ENCODE measurements at regions of chr4 and their contacts with region 1.

Region 1: DNA sequence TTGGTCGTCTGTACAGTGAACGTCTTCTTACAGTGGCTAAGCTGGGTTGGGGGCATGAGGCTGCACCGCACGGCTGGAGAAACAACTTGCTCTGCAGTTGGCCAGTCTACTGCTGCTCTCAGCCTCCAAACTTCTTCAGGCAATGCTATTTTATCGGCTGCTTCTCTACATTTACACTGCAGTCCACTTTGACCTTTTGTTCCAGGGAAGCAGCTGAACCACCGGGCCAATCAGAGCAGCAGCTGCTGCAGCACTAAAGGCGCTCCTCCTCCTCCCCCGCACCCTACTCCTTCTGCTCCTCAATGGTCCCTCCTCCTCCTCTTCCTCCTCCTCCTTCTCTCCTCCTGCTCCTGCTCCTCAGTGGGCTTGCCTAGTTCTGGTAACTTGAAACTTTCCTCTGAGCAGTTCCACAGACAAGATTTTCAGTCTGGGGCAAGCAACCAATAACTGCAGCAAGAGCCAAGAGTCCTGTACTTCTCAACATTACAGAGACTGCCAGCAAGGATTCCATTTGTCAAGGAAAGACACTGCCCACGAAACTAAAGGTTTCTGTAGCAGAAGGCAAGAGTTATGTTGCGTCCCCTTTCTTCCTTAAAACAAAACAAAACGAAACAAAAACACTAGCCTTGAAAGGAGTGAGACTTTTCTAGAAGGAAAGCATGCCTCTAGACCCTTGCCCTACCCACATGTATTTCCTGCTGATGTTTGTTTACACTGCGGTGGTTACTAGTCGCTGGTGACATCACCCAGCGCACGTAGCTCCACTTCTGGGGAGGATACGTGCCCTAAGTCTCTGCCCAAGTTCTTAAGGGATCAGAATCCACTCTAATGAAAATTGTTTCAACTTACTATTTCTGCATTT is 125.7 kb upstream of the NAP1L5 start:
- DNase-seq: peak; percentile 36 to 94 (median 61)
- ATAC-seq: peak; percentile 95
- H3K4me3 ChIP-seq: peak overlapping the region; percentile 42 to 51
- H3K4me3 Mint-ChIP-seq: peak overlapping the region; percentile 93
- H3K27ac ChIP-seq: peak overlapping the region; percentile 52 to 83
- H3K27ac Mint-ChIP-seq: peak overlapping the region; percentile 94
- H3K4me1 ChIP-seq: peaks cover 5% of the 10 kb centered on the region
- H3K4me1 Mint-ChIP-seq: peaks cover 29% of the 10 kb centered on the region
- H3K27me3 ChIP-seq: peaks cover 0 to 2% of the 10 kb centered on the region in 2 experiments
- H3K27me3 Mint-ChIP-seq: no peaks in the 10 kb centered on the region
- CTCF ChIP-seq: no peak

Region 2: DNA sequence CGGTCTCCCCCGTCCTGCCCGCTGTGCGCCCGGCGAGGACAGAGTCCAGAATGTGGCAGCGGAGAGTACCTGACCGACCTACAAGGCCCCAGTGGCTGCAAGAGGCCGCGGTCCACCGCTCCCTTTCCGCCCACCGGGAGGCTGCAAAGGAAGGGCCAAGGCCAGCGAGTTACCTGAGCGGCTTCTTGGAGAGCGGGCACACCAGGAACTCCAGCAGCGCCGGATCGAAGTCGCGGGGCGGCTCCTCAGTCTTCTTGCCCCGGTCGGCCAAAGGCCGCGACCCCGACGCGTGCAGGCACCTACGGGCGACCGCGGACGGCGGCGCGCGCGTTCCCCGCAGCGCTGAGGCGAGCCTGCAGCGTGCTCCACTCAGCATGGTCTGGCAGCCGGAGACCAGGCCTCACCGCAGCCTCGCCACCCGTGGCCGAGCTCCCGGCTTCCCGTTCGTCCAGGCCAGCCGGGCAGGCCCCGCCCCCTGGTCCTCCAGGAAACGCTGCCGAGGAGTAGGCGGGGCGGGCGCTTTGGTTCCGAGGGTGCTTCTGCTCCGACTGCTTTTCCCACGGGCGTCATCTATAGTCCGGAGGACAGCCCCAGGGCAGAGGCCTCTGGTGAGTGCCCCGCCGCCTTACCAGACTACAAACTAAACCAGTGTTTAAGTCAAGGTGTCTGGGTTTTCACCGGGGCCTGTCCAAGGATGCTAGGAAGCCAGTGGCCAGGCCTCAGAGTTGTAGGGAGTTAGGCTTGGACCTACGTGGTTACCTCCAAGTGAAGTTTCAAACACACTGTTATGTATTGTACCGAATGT is 299.8 kb before region 1 on chr4 and contains the start of gene PYURF:
- CTCF ChIA-PET with region 1: interaction called, 3 read pairs
- POLR2A ChIA-PET with region 1: no interaction called
- intact Hi-C with region 1: loop called (anchors 5 to 10 kb)
- DNase-seq: peak; percentile 31 to 87 (median 75)
- ATAC-seq: peak; percentile 76
- H3K4me3 ChIP-seq: peak within 1 kb of the TSS; percentile 78 to 90
- H3K4me3 Mint-ChIP-seq: peak within 1 kb of the TSS; percentile 93
- H3K27ac ChIP-seq: peak within 1 kb of the TSS; percentile 54 to 76
- H3K27ac Mint-ChIP-seq: peak within 1 kb of the TSS; percentile 94
- H3K4me1 ChIP-seq: peaks cover 16% of the 10 kb centered on the region
- H3K4me1 Mint-ChIP-seq: peaks cover 43% of the 10 kb centered on the region
- H3K27me3 ChIP-seq: no peaks in the 10 kb centered on the region
- H3K27me3 Mint-ChIP-seq: no peaks in the 10 kb centered on the region
- CTCF ChIP-seq: no peak
- total RNA-seq, gene PYURF: 25.5 to 27.6 TPM

Region 3: GRCh38 chr4:88702782-88703181 is 120.5 kb before region 1 on chr4:
- CTCF ChIA-PET with region 1: no interaction called
- POLR2A ChIA-PET with region 1: no interaction called
- intact Hi-C with region 1: loop called in 1 of 2 experiments (anchors 5 kb)
- DNase-seq: no peak
- ATAC-seq: no peak
- H3K4me3 ChIP-seq: no peak overlapping the region
- H3K4me3 Mint-ChIP-seq: no peak overlapping the region
- H3K27ac ChIP-seq: no peak overlapping the region
- H3K27ac Mint-ChIP-seq: no peak overlapping the region
- H3K4me1 ChIP-seq: peaks cover 4% of the 10 kb centered on the region
- H3K4me1 Mint-ChIP-seq: peaks cover 6% of the 10 kb centered on the region
- H3K27me3 ChIP-seq: no peaks in the 10 kb centered on the region
- H3K27me3 Mint-ChIP-seq: no peaks in the 10 kb centered on the region
- CTCF ChIP-seq: no peak

Region 4: DNA sequence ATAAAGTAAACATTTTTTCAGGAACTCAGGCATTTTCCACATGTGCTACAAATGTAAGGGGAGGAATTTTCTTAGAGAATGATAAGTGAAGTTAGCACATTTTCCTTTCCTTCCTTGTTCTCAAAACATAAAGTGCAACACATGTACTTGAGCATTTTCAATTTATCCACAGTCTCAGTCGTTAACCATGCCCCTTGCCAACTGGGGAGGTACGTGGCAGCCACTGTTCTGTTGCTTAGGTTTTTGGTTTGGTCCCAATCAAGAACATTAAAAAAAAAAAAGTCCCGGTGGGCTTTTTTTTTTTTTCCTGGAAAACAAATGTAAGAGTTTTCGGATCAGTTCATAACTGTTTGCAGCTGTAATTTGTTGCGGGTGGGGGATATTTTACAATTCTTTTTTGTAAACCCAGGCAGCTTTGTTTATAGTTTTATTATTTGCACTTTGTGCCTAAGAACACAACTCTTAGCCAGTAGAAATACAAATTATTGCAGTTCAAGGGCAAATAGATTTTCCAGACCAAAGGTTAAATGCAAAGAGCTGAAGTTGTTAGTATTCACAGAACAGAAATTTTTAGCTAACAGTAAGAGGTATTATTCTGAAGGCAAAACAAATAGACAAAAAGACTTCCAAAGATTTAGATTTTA is 13.6 kb before region 1 on chr4:
- CTCF ChIA-PET with region 1: interaction called, 10 read pairs
- POLR2A ChIA-PET with region 1: no interaction called
- intact Hi-C with region 1: no loop called
- DNase-seq: no peak
- ATAC-seq: no peak
- H3K4me3 ChIP-seq: no peak overlapping the region
- H3K4me3 Mint-ChIP-seq: no peak overlapping the region
- H3K27ac ChIP-seq: no peak overlapping the region
- H3K27ac Mint-ChIP-seq: no peak overlapping the region
- H3K4me1 ChIP-seq: no peaks in the 10 kb centered on the region
- H3K4me1 Mint-ChIP-seq: no peaks in the 10 kb centered on the region
- H3K27me3 ChIP-seq: no peaks in the 10 kb centered on the region
- H3K27me3 Mint-ChIP-seq: no peaks in the 10 kb centered on the region
- CTCF ChIP-seq: no peak

Region 5: DNA sequence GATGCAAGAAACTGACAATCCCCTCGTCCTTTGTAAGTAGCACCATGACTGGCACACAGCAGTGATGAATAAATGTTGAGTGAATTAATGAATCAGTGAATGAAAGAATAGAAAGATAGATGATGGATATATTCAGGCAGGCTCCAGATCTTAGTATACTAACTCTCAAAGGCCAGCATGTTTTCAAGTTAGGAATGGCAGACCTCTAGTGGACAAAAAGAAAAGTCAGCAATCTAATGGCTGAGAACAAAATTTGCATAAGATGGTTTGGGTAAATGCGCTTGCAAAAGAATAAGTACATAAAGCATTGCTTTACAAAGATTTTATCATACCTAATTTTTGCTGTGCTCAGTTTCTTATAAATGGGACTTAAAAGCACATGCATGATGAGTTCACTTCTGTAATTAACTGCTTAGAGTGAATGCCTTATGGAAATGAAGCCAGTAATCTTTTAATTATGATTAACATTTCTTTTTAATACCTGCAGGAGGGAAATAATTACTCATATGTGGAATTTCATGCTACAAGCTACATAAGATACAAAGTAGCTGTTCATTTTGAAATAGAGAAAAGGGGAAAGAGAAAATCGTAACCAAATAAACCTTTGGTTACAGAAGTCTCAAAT is 611.2 kb after region 1 on chr4:
- CTCF ChIA-PET with region 1: no interaction called
- POLR2A ChIA-PET with region 1: no interaction called
- intact Hi-C with region 1: loop called in 1 of 2 experiments (anchors 10 kb)
- DNase-seq: peak in 2 of 9 experiments; percentile 57 to 70
- ATAC-seq: peak; percentile 67
- H3K4me3 ChIP-seq: no peak overlapping the region
- H3K4me3 Mint-ChIP-seq: no peak overlapping the region
- H3K27ac ChIP-seq: no peak overlapping the region
- H3K27ac Mint-ChIP-seq: no peak overlapping the region
- H3K4me1 ChIP-seq: peaks cover 6% of the 10 kb centered on the region
- H3K4me1 Mint-ChIP-seq: peaks cover 7% of the 10 kb centered on the region
- H3K27me3 ChIP-seq: no peaks in the 10 kb centered on the region
- H3K27me3 Mint-ChIP-seq: peaks cover 4% of the 10 kb centered on the region
- CTCF ChIP-seq: peak; percentile 78

Region 6: DNA sequence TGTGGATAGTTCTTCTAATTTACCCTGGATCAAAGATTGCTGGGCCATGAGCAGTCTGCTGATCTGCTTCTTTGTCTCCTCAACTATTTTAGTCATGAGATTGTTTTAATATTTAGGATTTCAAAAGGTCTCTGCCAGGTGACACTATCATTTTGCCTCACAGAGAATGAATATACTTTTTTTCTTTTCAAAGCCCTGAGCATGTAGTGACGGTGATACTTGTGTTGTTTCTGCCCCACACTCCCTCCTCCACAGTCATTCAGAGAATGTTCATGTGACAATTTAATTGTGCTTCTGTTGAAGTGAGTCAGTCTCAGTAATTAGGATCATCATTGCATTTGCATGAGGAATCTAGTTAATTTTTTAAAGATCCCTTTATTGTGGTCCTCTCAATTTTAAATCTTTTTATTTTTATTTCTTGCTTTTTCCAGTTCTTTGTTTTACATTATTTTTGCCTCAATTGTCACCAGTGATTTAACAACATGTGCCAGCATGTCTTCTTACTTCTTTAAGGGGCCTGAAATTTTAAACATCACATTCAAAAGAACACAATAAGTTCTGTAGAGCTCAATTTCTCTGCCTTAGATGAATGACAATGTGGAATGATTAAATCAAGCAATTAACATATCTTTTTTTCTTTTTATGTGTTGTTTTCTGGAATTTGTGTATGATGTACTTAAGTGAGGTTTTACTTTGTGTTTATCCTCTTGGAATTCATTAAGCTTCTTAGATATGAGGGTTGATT is 1083.7 kb after region 1 on chr4:
- CTCF ChIA-PET with region 1: no interaction called
- POLR2A ChIA-PET with region 1: no interaction called
- intact Hi-C with region 1: loop called in 1 of 2 experiments (anchors 10 kb)
- DNase-seq: no peak
- ATAC-seq: no peak
- H3K4me3 ChIP-seq: no peak overlapping the region
- H3K4me3 Mint-ChIP-seq: no peak overlapping the region
- H3K27ac ChIP-seq: no peak overlapping the region
- H3K27ac Mint-ChIP-seq: no peak overlapping the region
- H3K4me1 ChIP-seq: no peaks in the 10 kb centered on the region
- H3K4me1 Mint-ChIP-seq: no peaks in the 10 kb centered on the region
- H3K27me3 ChIP-seq: no peaks in the 10 kb centered on the region
- H3K27me3 Mint-ChIP-seq: peaks cover 8% of the 10 kb centered on the region
- CTCF ChIP-seq: no peak

Measured in CD8-positive, alpha-beta T cell (primary cell).